ENCODE measurements at regions of chr6 and their contacts with region 1.

Region 1: GRCh38 chr6:125956506-125957390 is at the start of gene HINT3:
- DNase-seq: peak; percentile 96 to 98 (median 97)
- H3K4me3 ChIP-seq: peak within 1 kb of the TSS; percentile 60 to 94
- H3K4me3 Mint-ChIP-seq: peak within 1 kb of the TSS in 2 of 8 donors; percentile 66 to 67
- H3K27ac ChIP-seq: peak within 1 kb of the TSS; percentile 95
- H3K27ac Mint-ChIP-seq: no peak within 1 kb of the TSS
- H3K4me1 ChIP-seq: peaks cover 44% of the 10 kb centered on the region
- H3K4me1 Mint-ChIP-seq: peaks cover 3 to 25% (median 7%) of the 10 kb centered on the region in 4 donors
- H3K27me3 ChIP-seq: no peaks in the 10 kb centered on the region
- H3K27me3 Mint-ChIP-seq: no peaks in the 10 kb centered on the region
- total RNA-seq, gene HINT3: 10.6 to 12.7 TPM

Region 2: GRCh38 chr6:125301435-125302391 is 655.0 kb before region 1 on chr6 and contains the start of gene HDDC2:
- CTCF ChIA-PET with region 1: interaction called, 11 read pairs
- POLR2A ChIA-PET with region 1: interaction called, 7 read pairs
- intact Hi-C with region 1: loop called (anchors 2 kb)
- DNase-seq: peak in 4 of 5 donors; percentile 32 to 43 (median 37)
- H3K4me3 ChIP-seq: peak within 1 kb of the TSS; percentile 44 to 62
- H3K4me3 Mint-ChIP-seq: peak within 1 kb of the TSS; percentile 82 to 97 (median 92)
- H3K27ac ChIP-seq: peak within 1 kb of the TSS; percentile 62
- H3K27ac Mint-ChIP-seq: peak within 1 kb of the TSS; percentile 78 to 97 (median 94)
- H3K4me1 ChIP-seq: peaks cover 47% of the 10 kb centered on the region
- H3K4me1 Mint-ChIP-seq: peaks cover 44 to 59% (median 54%) of the 10 kb centered on the region in 4 donors
- H3K27me3 ChIP-seq: no peaks in the 10 kb centered on the region
- H3K27me3 Mint-ChIP-seq: no peaks in the 10 kb centered on the region
- total RNA-seq, gene HDDC2: 49.5 to 53.5 TPM

Region 3: DNA sequence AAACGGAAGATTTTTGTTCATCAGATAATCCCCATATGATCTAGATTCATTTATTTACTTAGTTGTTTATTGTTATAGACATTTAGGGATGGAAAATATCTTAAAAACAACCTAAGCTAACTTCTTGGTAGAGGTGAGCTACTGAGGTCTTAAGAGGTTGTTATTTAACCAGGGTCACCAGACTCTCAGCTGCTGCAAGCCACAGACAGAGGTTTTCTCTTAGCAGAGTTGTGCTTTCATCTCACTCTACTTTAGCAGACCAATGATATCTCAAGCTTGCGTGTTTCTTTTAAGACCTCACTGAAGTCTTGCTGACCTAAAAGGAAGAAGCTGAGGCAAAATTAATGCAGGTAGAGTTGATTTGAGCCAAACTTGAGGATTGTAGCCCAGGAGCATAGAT is 122.4 kb before region 1 on chr6:
- CTCF ChIA-PET with region 1: interaction called, 11 read pairs
- POLR2A ChIA-PET with region 1: interaction called, 4 read pairs
- intact Hi-C with region 1: no loop called
- DNase-seq: peak in 4 of 5 donors; percentile 24 to 50 (median 38)
- H3K4me3 ChIP-seq: no peak overlapping the region
- H3K4me3 Mint-ChIP-seq: peak overlapping the region; percentile 16 to 78 (median 40)
- H3K27ac ChIP-seq: no peak overlapping the region
- H3K27ac Mint-ChIP-seq: peak overlapping the region; percentile 49 to 95 (median 81)
- H3K4me1 ChIP-seq: peaks cover 62% of the 10 kb centered on the region
- H3K4me1 Mint-ChIP-seq: peaks cover 54 to 78% (median 64%) of the 10 kb centered on the region in 4 donors
- H3K27me3 ChIP-seq: no peaks in the 10 kb centered on the region
- H3K27me3 Mint-ChIP-seq: no peaks in the 10 kb centered on the region

Region 4: DNA sequence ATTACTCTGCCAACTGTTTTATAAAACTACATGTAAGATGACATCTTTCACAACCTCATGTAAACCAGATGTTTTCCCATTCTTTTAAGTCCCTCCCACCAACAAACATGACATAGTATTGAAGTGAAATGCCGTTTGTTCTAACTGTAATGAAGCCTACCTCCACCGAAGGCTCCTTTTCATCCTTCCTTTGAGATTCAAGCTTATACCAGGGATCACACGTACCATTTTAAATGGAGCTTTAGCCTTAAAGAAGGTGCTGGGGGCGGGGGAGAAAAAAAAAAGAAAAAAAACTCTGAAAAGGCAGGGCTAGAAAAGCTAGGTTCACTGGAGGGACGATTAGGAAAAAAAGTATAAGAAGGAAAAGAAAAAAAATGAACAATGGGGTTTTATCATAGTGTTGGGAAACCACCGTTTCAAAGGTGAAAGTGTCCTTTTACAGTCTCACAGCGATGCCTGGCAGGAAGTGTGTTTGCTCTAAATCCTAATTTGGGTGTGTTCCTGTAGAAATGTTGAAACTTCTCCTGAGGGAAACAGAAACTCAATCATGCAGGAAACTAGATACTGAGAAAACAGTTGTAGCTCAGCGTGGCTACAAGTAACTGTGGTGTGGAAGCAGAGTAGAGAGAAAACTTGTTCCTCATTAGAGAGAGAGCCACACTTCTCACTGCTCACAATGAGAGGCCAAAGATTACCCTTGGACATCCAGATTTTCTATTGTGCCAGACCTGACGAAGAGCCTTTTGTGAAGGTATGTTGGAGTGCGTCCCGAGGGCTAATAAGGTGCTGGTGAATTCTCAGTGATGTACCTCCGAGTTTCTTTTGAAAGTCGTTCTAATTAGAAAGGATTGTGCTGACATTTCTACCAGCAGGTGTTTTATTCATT is 37.8 kb before region 1 on chr6:
- CTCF ChIA-PET with region 1: interaction called, 34 read pairs
- POLR2A ChIA-PET with region 1: interaction called, 5 read pairs
- intact Hi-C with region 1: loop called (anchors 2 kb)
- DNase-seq: peak; percentile 63 to 80 (median 70)
- H3K4me3 ChIP-seq: peak overlapping the region in 1 of 2 donors; percentile 37
- H3K4me3 Mint-ChIP-seq: peak overlapping the region; percentile 51 to 87 (median 79)
- H3K27ac ChIP-seq: peak overlapping the region; percentile 73
- H3K27ac Mint-ChIP-seq: peak overlapping the region; percentile 83 to 97 (median 95)
- H3K4me1 ChIP-seq: peaks cover 23% of the 10 kb centered on the region
- H3K4me1 Mint-ChIP-seq: peaks cover 23 to 28% (median 27%) of the 10 kb centered on the region in 4 donors
- H3K27me3 ChIP-seq: no peaks in the 10 kb centered on the region
- H3K27me3 Mint-ChIP-seq: no peaks in the 10 kb centered on the region

Region 5: GRCh38 chr6:125968493-125968892 is 11.7 kb after region 1 on chr6:
- CTCF ChIA-PET with region 1: interaction called, 44 read pairs
- POLR2A ChIA-PET with region 1: interaction called, 4 read pairs
- intact Hi-C with region 1: no loop called
- DNase-seq: no peak
- H3K4me3 ChIP-seq: no peak overlapping the region
- H3K4me3 Mint-ChIP-seq: no peak overlapping the region
- H3K27ac ChIP-seq: no peak overlapping the region
- H3K27ac Mint-ChIP-seq: peak overlapping the region in 1 of 7 donors; percentile 70
- H3K4me1 ChIP-seq: no peaks in the 10 kb centered on the region
- H3K4me1 Mint-ChIP-seq: peaks cover 7 to 26% (median 21%) of the 10 kb centered on the region in 4 donors
- H3K27me3 ChIP-seq: no peaks in the 10 kb centered on the region
- H3K27me3 Mint-ChIP-seq: no peaks in the 10 kb centered on the region

Region 6: DNA sequence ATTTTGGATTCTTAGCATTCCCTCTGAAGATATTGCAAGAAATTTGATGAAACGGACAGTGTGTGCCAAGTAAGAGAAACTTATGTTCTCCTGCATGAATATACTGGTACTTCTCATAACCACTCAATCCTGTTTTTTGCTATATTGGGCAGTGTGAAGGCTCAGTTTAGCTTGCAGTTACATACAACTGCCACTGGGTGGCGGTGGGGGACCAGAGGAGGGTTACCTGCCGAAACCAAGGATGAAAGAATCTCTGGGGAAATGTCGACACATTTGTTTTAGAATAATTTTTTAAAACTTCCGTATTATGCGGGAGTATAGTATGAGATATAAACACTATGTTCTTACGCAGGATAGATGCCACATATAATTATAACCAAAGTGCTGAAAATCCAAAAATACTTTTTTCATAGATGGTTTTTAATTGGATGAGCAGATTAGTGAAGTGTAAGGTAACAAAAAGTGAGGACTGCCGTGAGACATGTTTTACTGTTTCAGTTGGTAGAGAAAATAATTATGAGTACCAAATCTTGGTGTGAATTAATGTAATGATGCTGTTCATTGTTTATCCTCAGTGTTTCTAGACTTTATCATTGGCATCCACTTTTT is 39.3 kb after region 1 on chr6:
- CTCF ChIA-PET with region 1: interaction called, 15 read pairs
- POLR2A ChIA-PET with region 1: interaction called, 3 read pairs
- intact Hi-C with region 1: no loop called
- DNase-seq: peak; percentile 56 to 73 (median 68)
- H3K4me3 ChIP-seq: no peak overlapping the region
- H3K4me3 Mint-ChIP-seq: peak overlapping the region; percentile 51 to 90 (median 83)
- H3K27ac ChIP-seq: no peak overlapping the region
- H3K27ac Mint-ChIP-seq: peak overlapping the region; percentile 0 to 68 (median 50)
- H3K4me1 ChIP-seq: no peaks in the 10 kb centered on the region
- H3K4me1 Mint-ChIP-seq: peaks cover 22 to 37% (median 25%) of the 10 kb centered on the region in 4 donors
- H3K27me3 ChIP-seq: no peaks in the 10 kb centered on the region
- H3K27me3 Mint-ChIP-seq: no peaks in the 10 kb centered on the region

Measured in CD4-positive, alpha-beta memory T cell (primary cell).